Endothelial cell of umbilical vein (primary cell): ENCODE measurements at regions of chr9 and their contacts with region 1.

Region 1: DNA sequence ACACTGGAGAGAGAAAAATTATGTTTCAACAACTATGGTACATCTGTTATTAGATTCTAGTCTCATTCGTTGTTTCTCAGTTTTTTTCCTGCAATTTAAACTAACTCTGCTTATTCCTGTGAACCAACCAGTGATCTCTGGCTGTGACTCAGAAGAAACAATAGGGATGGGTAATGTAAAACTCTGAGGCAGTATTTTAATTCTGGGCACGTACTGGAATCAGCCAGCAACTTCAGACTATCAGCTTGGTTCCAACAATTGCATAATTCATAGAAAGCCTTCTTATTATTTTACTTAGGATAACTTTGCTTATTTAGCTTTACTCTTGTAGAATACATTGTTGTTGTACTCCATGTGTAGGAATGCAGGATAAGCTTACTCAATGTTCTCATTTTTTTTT is 28.7 kb downstream of the MLLT3 start:
- DNase-seq: peak; percentile 43
- H3K4me3 ChIP-seq: no peak overlapping the region
- H3K27ac ChIP-seq: no peak overlapping the region
- H3K4me1 ChIP-seq: peaks cover 4% of the 10 kb centered on the region
- H3K27me3 ChIP-seq: no peaks in the 10 kb centered on the region
- CTCF ChIP-seq: no peak
- POLR2A ChIP-seq: no peak

Region 2: GRCh38 chr9:20552874-20553575 is 40.5 kb before region 1 on chr9:
- CTCF ChIA-PET with region 1: no interaction called
- POLR2A ChIA-PET with region 1: no interaction called
- dilution Hi-C with region 1: no loop called
- intact Hi-C with region 1: loop called (anchors 2 kb)
- DNase-seq: peak; percentile 20
- H3K4me3 ChIP-seq: no peak overlapping the region
- H3K27ac ChIP-seq: no peak overlapping the region
- H3K4me1 ChIP-seq: peaks cover 10% of the 10 kb centered on the region
- H3K27me3 ChIP-seq: no peaks in the 10 kb centered on the region
- CTCF ChIP-seq: no peak
- POLR2A ChIP-seq: no peak

Region 3: GRCh38 chr9:20604562-20604961 is 11.0 kb after region 1 on chr9:
- CTCF ChIA-PET with region 1: interaction called, 14 read pairs
- POLR2A ChIA-PET with region 1: no interaction called
- dilution Hi-C with region 1: no loop called
- intact Hi-C with region 1: no loop called
- DNase-seq: peak; percentile 44
- H3K4me3 ChIP-seq: no peak overlapping the region
- H3K27ac ChIP-seq: no peak overlapping the region
- H3K4me1 ChIP-seq: no peaks in the 10 kb centered on the region
- H3K27me3 ChIP-seq: no peaks in the 10 kb centered on the region
- CTCF ChIP-seq: no peak
- POLR2A ChIP-seq: no peak

Region 4: DNA sequence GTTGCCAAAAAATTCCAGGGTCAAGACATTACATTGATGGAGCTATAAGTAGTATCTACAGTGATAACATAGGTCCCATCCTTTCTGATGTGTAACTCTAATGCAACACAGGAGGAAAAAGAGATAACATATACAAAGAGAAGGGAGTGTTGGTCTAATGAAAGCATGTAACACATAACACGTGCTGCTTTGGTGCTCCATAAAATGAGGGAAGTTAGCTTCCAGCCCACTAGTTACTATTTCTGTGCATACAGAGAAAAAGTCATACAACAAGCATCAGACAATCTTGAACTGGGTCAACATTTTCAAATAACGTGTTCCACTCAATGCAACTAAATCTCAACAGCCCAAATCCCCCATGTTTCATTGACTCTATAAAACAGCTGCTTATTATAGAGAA is 17.0 kb after region 1 on chr9:
- CTCF ChIA-PET with region 1: interaction called, 14 read pairs
- POLR2A ChIA-PET with region 1: no interaction called
- dilution Hi-C with region 1: no loop called
- intact Hi-C with region 1: no loop called
- DNase-seq: no peak
- H3K4me3 ChIP-seq: no peak overlapping the region
- H3K27ac ChIP-seq: no peak overlapping the region
- H3K4me1 ChIP-seq: peaks cover 13% of the 10 kb centered on the region
- H3K27me3 ChIP-seq: no peaks in the 10 kb centered on the region
- CTCF ChIP-seq: no peak
- POLR2A ChIP-seq: no peak